B cell (primary cell): ENCODE measurements at regions of chr9 and their contacts with region 1.

Region 1: GRCh38 chr9:37753489-37754190 is at the start of gene TRMT10B:
- DNase-seq: peak; percentile 83
- ATAC-seq: peak; percentile 90
- H3K4me3 ChIP-seq: peak within 1 kb of the TSS; percentile 48 to 96 (median 84)
- H3K4me3 Mint-ChIP-seq: peak within 1 kb of the TSS; percentile 98
- H3K27ac ChIP-seq: peak within 1 kb of the TSS; percentile 80 to 81
- H3K27ac Mint-ChIP-seq: peak within 1 kb of the TSS; percentile 93
- H3K4me1 ChIP-seq: peaks cover 14 to 16% of the 10 kb centered on the region in 2 donors
- H3K4me1 Mint-ChIP-seq: peaks cover 23% of the 10 kb centered on the region
- H3K27me3 ChIP-seq: no peaks in the 10 kb centered on the region
- H3K27me3 Mint-ChIP-seq: no peaks in the 10 kb centered on the region
- CTCF ChIP-seq: no peak
- total RNA-seq, gene TRMT10B: 27.8 and 28.4 TPM in 2 replicates

Region 2: DNA sequence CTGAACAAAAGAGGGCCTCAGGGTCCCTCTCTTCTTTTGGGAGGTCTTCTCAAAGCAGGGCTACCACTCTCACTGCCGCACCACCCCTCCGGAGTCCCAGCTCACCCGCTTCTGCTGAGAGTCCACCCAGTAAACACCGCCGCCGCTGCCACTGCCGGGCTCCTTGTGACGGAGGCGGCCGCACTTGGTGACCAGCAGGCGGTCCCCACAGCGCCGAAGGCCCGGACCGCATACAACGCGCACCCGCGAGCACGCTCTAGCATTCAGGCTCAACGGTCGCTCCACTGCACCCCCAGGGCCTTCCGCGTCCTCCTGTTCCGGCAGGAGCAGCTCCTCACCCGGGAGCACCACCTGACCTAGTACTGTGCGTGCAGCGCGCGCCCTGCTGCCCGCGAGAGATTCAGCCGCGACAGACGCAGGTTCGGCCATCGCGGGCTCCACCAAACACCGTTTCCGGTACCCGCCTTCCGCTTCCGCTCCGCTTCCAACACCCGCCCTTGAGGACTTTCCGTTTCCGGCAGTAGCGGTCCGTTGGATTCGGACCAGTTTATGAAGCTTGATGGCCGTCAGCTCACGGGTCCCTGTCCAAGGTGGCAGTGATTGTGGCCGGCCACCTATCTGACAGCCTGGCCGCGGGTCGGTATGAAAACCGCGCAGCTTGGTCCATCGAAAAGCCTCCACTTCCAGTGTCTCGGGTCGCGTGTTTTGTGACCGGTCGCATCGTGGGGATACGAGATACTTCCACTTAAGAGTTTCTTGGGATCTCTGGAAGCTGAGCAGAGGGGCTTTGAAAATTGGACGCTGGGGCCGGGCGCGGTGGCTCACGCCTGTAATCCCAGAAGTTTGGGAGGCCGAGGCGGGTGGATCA is 31.2 kb after region 1 on chr9 and contains the start of gene EXOSC3:
- CTCF ChIA-PET with region 1: no interaction called
- POLR2A ChIA-PET with region 1: no interaction called
- intact Hi-C with region 1: loop called (anchors 2 kb)
- DNase-seq: peak; percentile 91
- ATAC-seq: peak; percentile 86
- H3K4me3 ChIP-seq: peak within 1 kb of the TSS; percentile 75 to 96 (median 87)
- H3K4me3 Mint-ChIP-seq: peak within 1 kb of the TSS; percentile 98
- H3K27ac ChIP-seq: peak within 1 kb of the TSS; percentile 69 to 86
- H3K27ac Mint-ChIP-seq: peak within 1 kb of the TSS; percentile 95
- H3K4me1 ChIP-seq: peaks cover 16 to 21% of the 10 kb centered on the region in 2 donors
- H3K4me1 Mint-ChIP-seq: peaks cover 33% of the 10 kb centered on the region
- H3K27me3 ChIP-seq: peaks cover 0 to 2% (median 0%) of the 10 kb centered on the region in 4 experiments
- H3K27me3 Mint-ChIP-seq: peaks cover 9% of the 10 kb centered on the region
- CTCF ChIP-seq: peak; percentile 26
- total RNA-seq, gene EXOSC3: 55.3 and 64.9 TPM in 2 replicates

Region 3: GRCh38 chr9:37806271-37806670 is 52.6 kb after region 1 on chr9:
- CTCF ChIA-PET with region 1: no interaction called
- POLR2A ChIA-PET with region 1: no interaction called
- intact Hi-C with region 1: no loop called
- DNase-seq: no peak
- ATAC-seq: no peak
- H3K4me3 ChIP-seq: no peak overlapping the region
- H3K4me3 Mint-ChIP-seq: no peak overlapping the region
- H3K27ac ChIP-seq: no peak overlapping the region
- H3K27ac Mint-ChIP-seq: no peak overlapping the region
- H3K4me1 ChIP-seq: peaks cover 16% of the 10 kb centered on the region in 2 donors
- H3K4me1 Mint-ChIP-seq: peaks cover 24% of the 10 kb centered on the region
- H3K27me3 ChIP-seq: no peaks in the 10 kb centered on the region
- H3K27me3 Mint-ChIP-seq: no peaks in the 10 kb centered on the region
- CTCF ChIP-seq: no peak